ENCODE measurements at regions of chr13 and their contacts with region 1.

Region 1: DNA sequence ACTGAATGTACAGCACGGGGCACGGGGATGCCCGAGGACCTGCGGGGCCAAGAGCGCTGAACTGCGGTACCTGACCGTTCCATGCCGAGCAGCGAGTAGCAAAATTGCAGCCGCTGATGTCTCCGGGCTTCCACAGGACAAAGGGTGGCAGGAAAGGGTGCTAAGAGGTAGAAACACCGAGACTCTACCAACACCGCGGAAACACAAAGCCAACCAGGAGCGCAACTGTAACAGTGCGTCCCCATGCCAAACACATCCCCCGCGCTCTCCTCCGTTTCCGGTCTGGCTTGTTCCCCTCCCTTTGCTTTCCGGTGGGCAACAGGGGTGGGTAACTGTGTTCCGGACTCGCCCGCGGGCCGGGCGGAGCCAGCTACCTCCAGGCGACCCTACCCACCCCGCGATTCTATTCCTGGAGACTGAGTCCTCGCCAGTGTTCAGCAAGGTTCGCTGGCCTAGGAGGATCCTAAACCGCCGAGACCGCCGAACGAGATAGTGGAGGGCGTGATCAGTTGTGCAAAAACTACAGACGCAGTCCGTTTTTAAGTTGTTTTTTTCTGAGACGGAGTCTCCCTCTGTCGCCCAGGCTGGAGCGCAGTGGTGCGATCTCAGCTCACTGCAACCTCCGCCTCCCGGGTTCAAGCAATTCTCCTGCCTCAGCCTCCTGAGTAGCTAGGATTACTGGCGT is 34.9 kb upstream of the NEK3 start:
- DNase-seq: peak; percentile 85
- H3K4me3 Mint-ChIP-seq: peak overlapping the region; percentile 96
- H3K27ac Mint-ChIP-seq: peak overlapping the region; percentile 91
- H3K4me1 Mint-ChIP-seq: peaks cover 6% of the 10 kb centered on the region
- H3K27me3 Mint-ChIP-seq: no peaks in the 10 kb centered on the region
- CTCF ChIP-seq: no peak

Region 2: DNA sequence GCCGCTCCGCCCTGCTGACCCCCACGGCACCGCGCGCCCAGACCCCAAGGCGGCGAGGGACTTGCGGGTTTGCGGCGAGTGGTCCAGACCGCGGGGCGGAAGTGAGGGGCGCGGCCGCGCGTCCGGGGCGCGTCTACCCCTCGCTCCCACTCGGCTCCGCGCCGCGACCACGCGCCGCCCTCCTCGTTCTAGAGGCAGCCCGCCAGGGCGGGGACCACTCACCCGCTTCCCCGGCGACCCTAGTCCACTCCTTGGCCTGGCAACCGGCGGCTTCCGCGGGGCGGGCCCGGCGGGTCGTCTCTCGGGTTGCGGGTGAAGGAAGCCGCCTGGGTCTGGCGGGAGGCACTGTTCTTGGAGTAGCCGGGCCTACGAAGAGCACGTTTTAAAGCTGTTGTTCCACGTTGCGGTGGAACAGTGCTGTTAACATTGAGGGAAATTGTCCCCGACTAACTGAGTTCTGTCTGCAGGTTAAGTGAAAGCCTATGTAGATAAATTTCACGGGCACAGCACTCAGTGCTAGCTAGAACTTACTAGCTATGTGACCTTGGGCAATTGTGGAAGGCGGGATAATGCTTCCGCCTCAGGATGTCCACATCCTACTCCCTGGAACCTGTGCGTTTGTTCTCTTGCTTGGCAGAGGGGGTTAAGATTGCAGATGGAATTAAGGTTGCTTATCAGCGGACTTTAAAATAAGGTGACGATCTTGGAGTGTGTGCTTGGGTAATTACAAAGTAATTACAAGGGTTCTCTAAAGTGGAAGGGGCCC is 34.8 kb before region 1 on chr13 and contains the start of gene NEK3:
- CTCF ChIA-PET with region 1: interaction called, 3 read pairs
- POLR2A ChIA-PET with region 1: interaction called, 7 read pairs
- intact Hi-C with region 1: loop called (anchors 5 kb)
- DNase-seq: peak; percentile 71
- H3K4me3 Mint-ChIP-seq: peak within 1 kb of the TSS; percentile 80
- H3K27ac Mint-ChIP-seq: peak within 1 kb of the TSS; percentile 63
- H3K4me1 Mint-ChIP-seq: peaks cover 12% of the 10 kb centered on the region
- H3K27me3 Mint-ChIP-seq: no peaks in the 10 kb centered on the region
- CTCF ChIP-seq: no peak
- total RNA-seq, gene NEK3: 18.1 and 23.7 TPM in 2 replicates